Activated CD8-positive, alpha-beta memory T cell treated with anti-CD3 and anti-CD28 coated beads, Interleukin-2, amount 10 ng/mL, durations not matched to agents 7 days and 5 days (primary cell): ENCODE measurements at regions of chr7 and their contacts with region 1.

Region 1: DNA sequence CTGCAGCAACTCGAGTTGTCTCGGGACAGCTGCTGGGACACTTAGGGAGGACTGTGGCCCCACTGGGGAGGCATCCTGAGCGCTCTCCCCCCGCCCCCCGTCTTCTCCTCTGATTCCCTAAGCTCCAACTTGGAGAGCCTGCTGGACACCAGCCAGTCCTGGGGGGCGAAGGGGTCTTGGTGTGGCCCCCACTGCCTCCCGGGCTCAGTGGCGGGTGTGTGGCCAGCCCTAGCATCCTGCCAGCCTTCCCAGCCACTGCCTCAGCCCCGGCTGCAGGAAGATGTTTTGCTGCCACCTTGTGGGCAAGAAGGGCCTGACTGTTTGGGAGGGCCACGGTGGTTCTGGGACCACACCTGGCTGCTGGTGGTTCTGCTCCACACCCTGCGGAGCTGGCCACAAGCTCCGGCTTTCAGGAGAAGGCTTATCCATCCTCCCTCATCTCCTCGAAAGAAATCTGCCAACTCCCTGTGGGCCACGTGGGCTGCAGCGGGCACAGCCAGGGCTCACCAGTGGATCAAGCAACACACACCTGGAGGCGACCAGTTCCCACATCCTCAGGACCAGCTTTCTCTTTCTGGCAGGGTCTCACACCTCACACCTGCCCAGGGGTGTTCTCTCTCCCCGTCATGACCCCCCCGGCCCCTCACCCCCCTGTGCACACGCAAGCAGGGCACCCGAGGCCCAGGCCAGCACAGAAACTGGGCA is 24.8 kb downstream of the AGAP3 start:
- DNase-seq: peak; percentile 84
- ATAC-seq: peak; percentile 85
- H3K4me3 Mint-ChIP-seq: no peak overlapping the region
- H3K27ac Mint-ChIP-seq: no peak overlapping the region
- H3K4me1 Mint-ChIP-seq: peaks cover 2% of the 10 kb centered on the region
- H3K27me3 Mint-ChIP-seq: peaks cover 16% of the 10 kb centered on the region

Region 2: DNA sequence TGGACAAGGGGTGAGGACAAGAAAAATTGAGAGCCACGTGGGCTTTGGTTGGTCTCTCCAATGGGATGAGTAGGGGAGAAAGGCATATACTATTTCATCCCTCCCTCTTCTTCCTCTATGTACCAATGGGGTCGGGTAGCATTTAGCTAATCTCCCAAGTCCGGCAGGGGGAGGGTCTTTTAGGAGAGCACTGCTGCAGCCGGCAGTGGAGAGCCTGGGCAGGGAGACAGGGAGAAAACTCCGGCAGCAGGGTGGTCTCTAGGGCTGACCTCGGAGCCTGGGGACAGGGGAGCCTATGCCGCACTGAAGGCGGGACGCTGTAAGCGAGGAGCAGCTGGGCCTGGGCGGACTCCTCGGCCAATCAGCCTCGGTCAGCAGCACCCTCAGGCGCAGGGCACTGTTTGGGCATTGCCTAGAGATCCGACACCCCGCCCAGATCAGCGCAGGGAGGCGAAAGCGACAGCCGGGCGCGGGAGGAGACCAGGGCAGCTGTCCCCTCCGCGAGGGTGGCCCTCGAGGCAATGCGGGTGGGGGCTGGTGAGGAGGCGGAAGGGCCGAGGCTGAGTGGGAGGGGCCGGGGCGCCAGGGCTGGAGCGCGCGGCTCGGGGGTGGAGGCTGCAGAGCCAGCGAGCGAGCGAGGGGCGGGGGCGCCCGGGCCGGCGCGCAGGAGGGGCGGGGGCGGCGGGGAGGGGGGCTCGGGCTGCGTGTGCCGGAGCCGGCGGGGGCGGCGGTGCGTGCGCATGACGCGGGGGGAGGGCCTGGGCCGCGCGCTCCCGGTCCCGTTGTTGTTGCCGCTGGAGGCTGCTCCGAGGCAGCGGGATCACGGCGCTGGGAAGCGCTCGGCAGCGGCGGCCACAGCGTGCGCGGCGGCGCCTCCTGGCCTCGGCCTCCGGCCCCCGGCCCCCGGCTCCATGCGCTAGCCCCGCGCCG is 25.1 kb before region 1 on chr7 and contains the start of gene AGAP3:
- CTCF ChIA-PET with region 1: interaction called, 69 read pairs
- DNase-seq: peak; percentile 70
- ATAC-seq: peak; percentile 31
- H3K4me3 Mint-ChIP-seq: peak within 1 kb of the TSS; percentile 80
- H3K27ac Mint-ChIP-seq: peak within 1 kb of the TSS; percentile 79
- H3K4me1 Mint-ChIP-seq: peaks cover 37% of the 10 kb centered on the region
- H3K27me3 Mint-ChIP-seq: peaks cover 16% of the 10 kb centered on the region
- total RNA-seq, gene AGAP3: 30.0 to 36.2 TPM